ENCODE measurements at regions of chr11 and their contacts with region 1.

Region 1: DNA sequence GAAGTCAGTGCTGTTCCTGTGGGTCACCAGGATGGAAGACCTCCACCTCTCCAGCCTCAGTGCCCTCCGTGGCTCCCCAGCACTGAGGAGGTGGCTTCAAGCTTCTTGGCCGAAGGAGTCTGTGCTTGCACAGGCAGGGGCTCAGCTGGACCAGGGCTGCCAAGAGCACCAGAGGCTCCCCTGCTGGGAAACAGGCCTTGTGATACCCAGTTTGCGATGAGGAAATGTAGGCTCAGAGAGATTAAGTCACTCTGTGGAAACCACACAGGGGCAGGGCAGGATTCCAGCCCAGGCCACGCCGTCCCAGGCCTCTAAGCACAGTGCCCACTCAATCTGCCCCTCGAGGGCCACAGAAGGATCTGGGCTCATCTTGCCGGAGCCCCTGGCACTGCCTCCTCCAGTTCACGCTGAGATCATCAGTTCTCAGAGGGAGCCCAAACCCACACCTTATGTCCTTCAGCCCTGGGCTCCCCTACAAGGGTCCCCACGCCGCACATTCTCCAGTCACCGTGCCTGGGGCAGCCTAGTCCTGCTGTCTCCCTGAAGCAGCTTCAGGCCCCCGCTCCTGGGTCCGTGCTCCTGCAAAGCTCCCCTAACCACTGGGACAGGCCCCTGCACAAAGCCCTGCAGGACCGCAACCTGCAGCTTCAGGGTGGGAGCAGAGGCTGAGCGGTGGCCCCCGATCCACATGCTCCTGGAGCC is 21.6 kb downstream of the ANO1 start:
- DNase-seq: no peak
- H3K4me3 ChIP-seq: no peak overlapping the region
- H3K27ac ChIP-seq: no peak overlapping the region
- H3K4me1 ChIP-seq: no peaks in the 10 kb centered on the region
- H3K27me3 ChIP-seq: no peaks in the 10 kb centered on the region
- CTCF ChIP-seq: no peak

Region 2: DNA sequence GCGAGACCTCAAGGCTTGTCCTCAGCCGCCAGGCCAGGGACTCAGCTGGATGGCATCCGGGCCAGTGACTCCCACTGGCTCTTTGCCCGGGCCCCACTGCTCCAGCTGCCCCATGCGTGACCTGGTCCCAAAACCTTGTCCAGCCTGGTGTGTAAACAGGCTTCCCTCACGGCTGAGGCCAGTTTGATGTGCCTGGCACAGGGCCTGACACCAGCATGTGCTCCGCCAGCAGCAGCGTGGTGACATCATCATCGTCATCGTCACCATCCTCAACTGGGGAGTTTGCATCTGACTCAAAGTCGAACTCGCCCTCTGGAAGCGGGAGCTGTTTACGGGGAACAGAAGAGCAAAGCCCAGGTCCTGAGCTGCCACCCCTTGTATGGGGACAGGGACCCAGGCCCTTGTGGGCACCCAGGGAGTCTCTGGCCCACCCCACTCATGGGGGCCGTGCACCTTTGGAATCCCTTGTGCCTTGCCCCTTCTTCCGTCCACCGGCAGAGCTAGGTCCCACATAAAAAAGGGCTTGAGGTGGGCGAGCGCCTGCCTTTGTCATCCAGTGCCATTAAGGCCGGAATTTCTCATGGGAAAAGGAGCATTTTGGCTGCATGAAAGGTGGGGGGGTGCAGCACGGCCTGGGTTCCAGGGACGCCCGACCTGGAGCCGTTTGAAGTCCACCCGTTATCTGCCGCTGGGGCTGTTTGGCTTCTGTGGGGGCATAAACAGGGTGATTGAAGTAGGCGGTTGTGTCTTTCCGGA is 231.8 kb before region 1 on chr11:
- CTCF ChIA-PET with region 1: no interaction called
- dilution Hi-C with region 1: loop called (anchors 5 kb)
- in situ Hi-C with region 1: no loop called
- intact Hi-C with region 1: no loop called
- DNase-seq: no peak
- H3K4me3 ChIP-seq: no peak overlapping the region
- H3K27ac ChIP-seq: no peak overlapping the region
- H3K4me1 ChIP-seq: no peaks in the 10 kb centered on the region
- H3K27me3 ChIP-seq: no peaks in the 10 kb centered on the region
- CTCF ChIP-seq: no peak

Region 3: DNA sequence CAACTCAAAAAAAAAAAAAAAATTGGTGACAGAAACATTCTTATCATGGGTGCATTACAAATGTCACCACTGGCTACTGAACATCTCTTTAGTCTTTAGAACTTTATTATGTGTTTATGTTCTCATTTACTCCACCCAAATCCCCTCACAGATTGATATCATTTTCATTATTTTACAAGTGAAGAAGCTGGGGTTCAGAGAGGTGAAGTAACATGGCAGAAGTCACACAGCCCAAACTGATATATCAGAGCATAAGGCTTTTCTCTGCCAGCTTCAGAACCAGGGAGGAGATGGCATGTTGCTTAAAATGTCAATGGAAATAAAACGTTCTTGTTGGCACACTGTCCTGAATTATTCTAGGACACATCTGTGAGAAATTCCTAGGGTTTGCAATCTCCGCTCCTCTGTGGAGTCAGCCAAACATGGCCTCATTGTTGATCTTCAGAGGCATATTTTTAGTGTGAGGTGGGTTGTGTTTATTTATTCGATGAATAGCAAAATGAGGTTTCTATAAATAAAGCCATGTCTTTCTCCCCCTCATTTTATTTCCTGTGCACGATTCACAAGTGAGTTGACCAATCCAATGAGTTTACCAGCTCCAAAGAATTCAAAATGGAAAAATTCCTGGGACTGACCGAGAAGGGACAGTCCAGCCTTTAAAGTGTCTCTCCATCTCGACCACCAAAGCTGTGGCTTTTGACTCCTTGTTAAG is 94.5 kb before region 1 on chr11:
- CTCF ChIA-PET with region 1: no interaction called
- dilution Hi-C with region 1: loop called (anchors 5 kb)
- in situ Hi-C with region 1: no loop called
- intact Hi-C with region 1: no loop called
- DNase-seq: no peak
- H3K4me3 ChIP-seq: no peak overlapping the region
- H3K27ac ChIP-seq: no peak overlapping the region
- H3K4me1 ChIP-seq: peaks cover 2% of the 10 kb centered on the region
- H3K27me3 ChIP-seq: no peaks in the 10 kb centered on the region
- CTCF ChIP-seq: no peak

Region 4: GRCh38 chr11:70183483-70184169 is 83.9 kb after region 1 on chr11:
- CTCF ChIA-PET with region 1: no interaction called
- dilution Hi-C with region 1: loop called (anchors 5 kb)
- in situ Hi-C with region 1: no loop called
- intact Hi-C with region 1: no loop called
- DNase-seq: no peak
- H3K4me3 ChIP-seq: no peak overlapping the region
- H3K27ac ChIP-seq: no peak overlapping the region
- H3K4me1 ChIP-seq: no peaks in the 10 kb centered on the region
- H3K27me3 ChIP-seq: no peaks in the 10 kb centered on the region
- CTCF ChIP-seq: no peak

Measured in mammary epithelial cell (primary cell).